CD4-positive, alpha-beta T cell (primary cell): ENCODE measurements at regions of chr5 and their contacts with region 1.

Region 1: DNA sequence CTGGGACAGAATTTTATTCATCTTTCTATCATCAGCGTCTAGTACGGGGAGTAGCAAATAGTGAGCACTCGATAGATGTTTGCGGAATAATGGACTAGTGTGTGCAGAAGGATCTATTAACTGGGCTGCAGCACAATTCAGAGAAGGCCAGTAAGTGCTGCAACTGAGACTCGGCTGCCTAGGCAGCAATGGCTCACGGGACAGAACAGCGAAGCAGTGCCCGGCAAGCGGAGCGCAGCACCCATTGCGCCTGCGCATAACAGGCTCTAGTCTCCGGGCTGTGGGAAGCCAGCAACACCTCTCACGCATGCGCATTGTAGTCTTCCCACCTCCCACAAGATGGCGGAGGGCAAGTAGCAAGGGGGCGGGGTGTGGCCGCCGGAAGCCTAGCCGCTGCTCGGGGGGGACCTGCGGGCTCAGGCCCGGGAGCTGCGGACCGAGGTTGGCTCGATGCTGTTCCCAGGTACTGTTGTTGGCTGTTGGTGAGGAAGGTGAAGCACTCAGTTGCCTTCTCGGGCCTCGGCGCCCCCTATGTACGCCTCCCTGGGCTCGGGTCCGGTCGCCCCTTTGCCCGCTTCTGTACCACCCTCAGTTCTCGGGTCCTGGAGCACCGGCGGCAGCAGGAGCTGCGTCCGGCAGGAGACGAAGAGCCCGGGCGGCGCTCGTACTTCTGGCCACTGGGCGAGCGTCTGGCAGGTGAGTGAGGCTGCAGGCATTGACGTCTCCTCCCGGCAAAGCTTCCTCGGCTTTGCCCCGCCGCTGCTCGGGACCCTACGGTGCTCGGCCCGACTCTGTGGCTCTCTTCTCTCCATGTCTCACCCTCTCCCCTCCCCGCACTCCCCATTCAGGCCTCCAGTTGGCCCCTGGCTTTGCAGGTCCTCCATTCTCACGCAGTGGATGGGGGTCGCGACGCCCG is 30.2 kb upstream of the APC start:
- DNase-seq: peak; percentile 88 to 99 (median 96)
- ATAC-seq: peak; percentile 93
- H3K4me3 ChIP-seq: peak overlapping the region; percentile 87
- H3K4me3 Mint-ChIP-seq: peak overlapping the region; percentile 94
- H3K27ac ChIP-seq: peak overlapping the region; percentile 65 to 82
- H3K27ac Mint-ChIP-seq: peak overlapping the region; percentile 83
- H3K4me1 ChIP-seq: peaks cover 39% of the 10 kb centered on the region
- H3K4me1 Mint-ChIP-seq: peaks cover 62% of the 10 kb centered on the region
- H3K27me3 ChIP-seq: no peaks in the 10 kb centered on the region
- H3K27me3 Mint-ChIP-seq: no peaks in the 10 kb centered on the region
- CTCF ChIP-seq: no peak

Region 2: GRCh38 chr5:111092062-111092853 is 1615.2 kb before region 1 on chr5 and contains the start of gene WDR36:
- CTCF ChIA-PET with region 1: no interaction called
- POLR2A ChIA-PET with region 1: no interaction called
- intact Hi-C with region 1: loop called in 1 of 2 experiments (anchors 10 kb)
- DNase-seq: peak; percentile 78 to 93 (median 86)
- ATAC-seq: peak; percentile 93
- H3K4me3 ChIP-seq: peak within 1 kb of the TSS; percentile 89
- H3K4me3 Mint-ChIP-seq: peak within 1 kb of the TSS; percentile 90
- H3K27ac ChIP-seq: peak within 1 kb of the TSS; percentile 68 to 85
- H3K27ac Mint-ChIP-seq: peak within 1 kb of the TSS; percentile 94
- H3K4me1 ChIP-seq: peaks cover 9% of the 10 kb centered on the region
- H3K4me1 Mint-ChIP-seq: peaks cover 41% of the 10 kb centered on the region
- H3K27me3 ChIP-seq: no peaks in the 10 kb centered on the region
- H3K27me3 Mint-ChIP-seq: peaks cover 9% of the 10 kb centered on the region
- CTCF ChIP-seq: no peak
- total RNA-seq, gene WDR36: 22.0 to 22.4 TPM

Region 3: DNA sequence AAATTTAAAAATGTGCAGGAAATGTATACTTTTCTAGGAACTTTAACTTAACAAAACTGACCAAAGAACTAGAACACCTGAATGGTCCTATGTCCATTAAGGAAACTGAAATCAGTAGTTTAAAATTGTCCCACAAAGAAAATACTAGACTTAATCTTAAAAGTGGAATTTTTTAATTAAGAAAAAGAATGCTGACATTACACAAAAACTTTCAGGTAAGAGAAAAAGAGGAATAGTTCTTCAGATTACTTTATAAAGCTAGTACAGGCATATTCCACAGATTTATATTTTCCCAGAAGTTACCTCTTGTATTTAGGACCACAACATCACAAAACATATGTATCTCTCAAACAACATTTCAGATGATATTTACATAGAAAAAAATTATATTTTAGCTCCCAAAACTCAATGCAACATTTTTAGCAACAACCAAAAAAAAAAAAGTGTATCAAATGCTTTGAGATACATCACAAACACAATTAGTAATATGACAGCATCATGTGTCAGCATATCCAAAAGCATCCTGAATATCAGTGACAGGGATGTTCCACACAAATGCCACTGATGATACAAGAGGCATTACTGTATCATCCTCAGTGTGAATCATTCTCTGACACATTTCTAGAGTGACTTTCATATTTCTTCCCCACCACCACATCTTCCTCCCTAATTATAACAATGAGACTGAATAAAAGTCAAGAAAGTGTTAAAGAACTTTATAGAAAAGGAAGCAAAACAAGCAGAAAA is 552.3 kb before region 1 on chr5:
- CTCF ChIA-PET with region 1: no interaction called
- POLR2A ChIA-PET with region 1: no interaction called
- intact Hi-C with region 1: loop called in 1 of 2 experiments (anchors 5 kb)
- DNase-seq: peak in 1 of 14 experiments; percentile 29
- ATAC-seq: no peak
- H3K4me3 ChIP-seq: no peak overlapping the region
- H3K4me3 Mint-ChIP-seq: no peak overlapping the region
- H3K27ac ChIP-seq: no peak overlapping the region
- H3K27ac Mint-ChIP-seq: no peak overlapping the region
- H3K4me1 ChIP-seq: peaks cover 1% of the 10 kb centered on the region
- H3K4me1 Mint-ChIP-seq: no peaks in the 10 kb centered on the region
- H3K27me3 ChIP-seq: no peaks in the 10 kb centered on the region
- H3K27me3 Mint-ChIP-seq: no peaks in the 10 kb centered on the region
- CTCF ChIP-seq: no peak

Region 4: DNA sequence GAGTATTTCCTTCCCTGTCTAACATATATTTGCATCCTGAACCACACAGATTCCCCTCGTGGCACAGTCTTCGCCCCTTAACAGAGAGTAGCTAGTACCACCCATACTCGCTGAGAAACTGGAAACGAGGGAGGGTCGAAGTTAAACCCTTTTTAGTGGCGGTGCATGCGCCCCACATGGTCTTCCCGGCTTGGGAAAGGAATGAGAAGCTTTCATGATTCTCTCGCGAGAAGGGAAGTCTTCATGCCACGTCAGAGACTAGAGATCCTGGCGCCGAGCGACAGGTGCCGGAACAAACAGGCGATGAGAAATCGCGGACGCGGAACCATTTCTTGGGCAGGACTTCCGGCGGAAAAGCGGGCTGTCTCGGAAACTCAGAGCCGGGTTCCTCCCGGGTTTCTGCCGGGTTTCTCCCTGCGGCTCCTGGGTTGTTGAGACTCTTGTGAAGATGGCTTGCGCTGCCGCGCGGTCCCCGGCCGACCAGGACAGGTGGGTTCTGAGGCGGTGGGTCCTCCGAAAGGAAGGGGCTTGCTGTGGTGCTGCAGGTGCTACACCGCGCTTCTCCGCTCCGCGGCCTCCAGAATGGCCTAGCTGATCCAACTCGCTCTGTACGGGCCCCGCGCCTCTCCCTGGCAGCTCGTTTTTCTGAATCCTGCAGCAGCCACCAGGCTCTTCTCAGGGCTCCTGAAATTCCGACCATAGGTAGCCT is 153.6 kb after region 1 on chr5 and contains the start of gene SRP19:
- CTCF ChIA-PET with region 1: no interaction called
- POLR2A ChIA-PET with region 1: no interaction called
- intact Hi-C with region 1: loop called (anchors 2 to 10 kb)
- DNase-seq: peak; percentile 82 to 97 (median 86)
- ATAC-seq: peak; percentile 93
- H3K4me3 ChIP-seq: peak within 1 kb of the TSS; percentile 94
- H3K4me3 Mint-ChIP-seq: peak within 1 kb of the TSS; percentile 92
- H3K27ac ChIP-seq: peak within 1 kb of the TSS; percentile 65 to 88
- H3K27ac Mint-ChIP-seq: peak within 1 kb of the TSS; percentile 93
- H3K4me1 ChIP-seq: peaks cover 24% of the 10 kb centered on the region
- H3K4me1 Mint-ChIP-seq: peaks cover 36% of the 10 kb centered on the region
- H3K27me3 ChIP-seq: no peaks in the 10 kb centered on the region
- H3K27me3 Mint-ChIP-seq: peaks cover 12% of the 10 kb centered on the region
- CTCF ChIP-seq: no peak
- total RNA-seq, gene SRP19: 40.2 to 40.8 TPM

Region 5: DNA sequence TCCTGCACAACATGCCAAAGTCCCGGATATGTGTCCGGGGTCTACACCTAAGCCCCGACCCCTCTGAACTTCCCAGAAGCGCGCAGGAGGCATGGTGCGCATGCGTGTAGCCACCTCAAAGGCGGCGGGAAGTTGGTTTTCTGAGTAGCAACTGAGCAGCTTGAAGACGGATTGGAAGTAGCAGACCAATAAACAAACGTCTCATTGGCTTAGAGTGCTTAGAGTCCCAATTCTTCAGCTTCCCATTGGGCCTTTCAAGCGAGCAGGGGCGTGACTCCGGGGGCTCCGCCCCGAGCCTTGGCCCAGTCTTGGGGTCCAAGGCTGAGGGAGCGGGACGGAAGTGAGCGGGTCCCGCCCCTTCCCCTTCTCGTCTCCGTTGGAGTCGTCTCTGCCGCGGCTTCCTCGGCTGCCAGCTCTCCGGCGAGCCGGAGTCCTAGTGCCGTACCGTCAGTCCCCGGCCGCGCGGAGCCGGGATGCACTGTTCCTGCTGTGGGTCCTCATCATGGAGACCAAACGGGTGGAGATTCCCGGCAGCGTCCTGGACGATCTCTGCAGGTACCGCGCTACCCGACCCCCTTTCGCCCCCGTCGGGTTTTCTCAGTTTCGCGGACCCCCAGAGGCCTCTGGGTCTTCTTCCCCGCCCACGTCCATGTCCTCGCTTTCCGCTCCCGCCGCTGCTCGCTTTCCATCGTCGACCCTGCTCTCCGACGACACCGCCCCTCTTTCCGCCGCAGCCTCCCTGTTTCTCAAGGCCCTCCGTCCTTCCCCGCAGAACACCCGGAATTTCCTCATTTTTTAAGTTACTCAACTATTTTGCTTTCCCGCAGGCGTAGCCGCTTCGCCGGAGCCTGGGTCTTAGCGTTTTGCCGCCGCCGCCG is 269.2 kb after region 1 on chr5 and contains the start of gene DCP2:
- CTCF ChIA-PET with region 1: no interaction called
- POLR2A ChIA-PET with region 1: interaction called, 5 read pairs
- intact Hi-C with region 1: loop called in 1 of 2 experiments (anchors 5 kb)
- DNase-seq: peak; percentile 87 to 99 (median 94)
- ATAC-seq: peak; percentile 93
- H3K4me3 ChIP-seq: peak within 1 kb of the TSS; percentile 92
- H3K4me3 Mint-ChIP-seq: peak within 1 kb of the TSS; percentile 100
- H3K27ac ChIP-seq: peak within 1 kb of the TSS; percentile 72 to 78
- H3K27ac Mint-ChIP-seq: peak within 1 kb of the TSS; percentile 96
- H3K4me1 ChIP-seq: peaks cover 15% of the 10 kb centered on the region
- H3K4me1 Mint-ChIP-seq: peaks cover 56% of the 10 kb centered on the region
- H3K27me3 ChIP-seq: no peaks in the 10 kb centered on the region
- H3K27me3 Mint-ChIP-seq: no peaks in the 10 kb centered on the region
- CTCF ChIP-seq: no peak
- total RNA-seq, gene DCP2: 86.3 to 87.1 TPM